H1 (cell line): ENCODE measurements at regions of chr3 and their contacts with region 1.

Region 1: GRCh38 chr3:10551821-10552630 is 46.6 kb upstream of the ATP2B2 start:
- DNase-seq: peak in 1 of 2 experiments; percentile 36
- H3K4me3 ChIP-seq: no peak overlapping the region
- H3K27ac ChIP-seq: no peak overlapping the region
- H3K4me1 ChIP-seq: peaks cover 4 to 11% (median 7%) of the 10 kb centered on the region in 4 experiments; a peak in 5 of 7 replicates
- H3K27me3 ChIP-seq: no peaks in the 10 kb centered on the region
- CTCF ChIP-seq: no peak
- EP300 ChIP-seq: no peak
- POLR2A ChIP-seq: no peak
- RAD21 ChIP-seq: no peak

Region 2: GRCh38 chr3:10561946-10562560 is 10.0 kb after region 1 on chr3:
- CTCF ChIA-PET with region 1: interaction called, 18 read pairs
- POLR2A ChIA-PET with region 1: no interaction called
- DNase-seq: peak in 1 of 2 experiments; percentile 6
- H3K4me3 ChIP-seq: no peak overlapping the region
- H3K27ac ChIP-seq: no peak overlapping the region
- H3K4me1 ChIP-seq: no peaks in the 10 kb centered on the region
- H3K27me3 ChIP-seq: no peaks in the 10 kb centered on the region
- CTCF ChIP-seq: no peak
- EP300 ChIP-seq: no peak
- POLR2A ChIP-seq: no peak
- RAD21 ChIP-seq: no peak

Region 3: DNA sequence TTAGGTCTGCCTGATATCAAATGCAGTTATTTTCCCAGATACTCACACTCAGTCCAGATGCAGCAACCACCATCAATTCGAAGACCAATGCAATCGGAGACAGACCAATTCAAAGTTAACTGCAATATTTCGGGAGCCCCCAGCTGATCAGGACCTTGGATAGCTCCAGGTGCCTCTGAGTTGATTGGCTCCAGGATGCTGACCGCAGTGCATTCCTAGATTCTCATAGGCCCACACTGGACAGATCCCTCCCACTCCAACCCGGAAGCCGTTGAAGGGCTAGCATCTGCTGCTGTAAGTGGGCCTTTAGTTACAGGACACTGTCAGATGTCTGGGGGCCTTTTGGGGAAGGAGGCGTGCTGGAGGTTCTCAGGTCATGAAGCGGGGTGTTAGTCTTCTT is 42.9 kb after region 1 on chr3:
- CTCF ChIA-PET with region 1: no interaction called
- POLR2A ChIA-PET with region 1: no interaction called
- DNase-seq: peak; percentile 57 to 89
- H3K4me3 ChIP-seq: no peak overlapping the region
- H3K27ac ChIP-seq: no peak overlapping the region
- H3K4me1 ChIP-seq: no peaks in the 10 kb centered on the region
- H3K27me3 ChIP-seq: no peaks in the 10 kb centered on the region; a peak in 1 of 7 replicates
- CTCF ChIP-seq: no peak
- EP300 ChIP-seq: no peak
- POLR2A ChIP-seq: no peak
- RAD21 ChIP-seq: no peak